ENCODE measurements at regions of chr4 and their contacts with region 1.

Region 1: GRCh38 chr4:169010125-169011023 is at the start of gene CBR4:
- DNase-seq: peak; percentile 98 to 99
- ATAC-seq: peak; percentile 98 to 99 (median 98)
- H3K4me3 ChIP-seq: peak within 1 kb of the TSS; percentile 90
- H3K27ac ChIP-seq: peak within 1 kb of the TSS; percentile 98
- H3K4me1 ChIP-seq: peaks cover 24% of the 10 kb centered on the region
- H3K27me3 ChIP-seq: no peaks in the 10 kb centered on the region
- CTCF ChIP-seq: peak; percentile 41
- total RNA-seq, gene CBR4: 10.4 to 18.5 (median 14.9) TPM

Region 2: GRCh38 chr4:168978001-168978700 is 32.2 kb before region 1 on chr4:
- intact Hi-C with region 1: no loop called
- DNase-seq: no peak
- ATAC-seq: no peak
- H3K4me3 ChIP-seq: no peak overlapping the region
- H3K27ac ChIP-seq: no peak overlapping the region
- H3K4me1 ChIP-seq: no peaks in the 10 kb centered on the region
- H3K27me3 ChIP-seq: no peaks in the 10 kb centered on the region
- CTCF ChIP-seq: no peak

Region 3: GRCh38 chr4:169283114-169283509 is 272.7 kb after region 1 on chr4:
- intact Hi-C with region 1: loop called in 1 of 2 experiments (anchors 5 kb)
- DNase-seq: no peak
- ATAC-seq: no peak
- H3K4me3 ChIP-seq: no peak overlapping the region
- H3K27ac ChIP-seq: no peak overlapping the region
- H3K4me1 ChIP-seq: no peaks in the 10 kb centered on the region
- H3K27me3 ChIP-seq: no peaks in the 10 kb centered on the region
- CTCF ChIP-seq: no peak

Region 4: GRCh38 chr4:170027181-170027829 is 1016.9 kb after region 1 on chr4:
- intact Hi-C with region 1: loop called in 1 of 2 experiments (anchors 5 kb)
- DNase-seq: peak; percentile 96 to 97
- ATAC-seq: peak; percentile 92 to 95 (median 94)
- H3K4me3 ChIP-seq: peak overlapping the region; percentile 91
- H3K27ac ChIP-seq: peak overlapping the region; percentile 85
- H3K4me1 ChIP-seq: no peaks in the 10 kb centered on the region
- H3K27me3 ChIP-seq: no peaks in the 10 kb centered on the region
- CTCF ChIP-seq: no peak

Measured in psoas muscle (tissue), 8 donors.